Activated CD8-positive, alpha-beta T cell treated with anti-CD3 and anti-CD28 coated beads, Interleukin-2, amount 10 ng/mL, durations not matched to agents 7 days and 5 days (primary cell): ENCODE measurements at regions of chr9 and their contacts with region 1.

Region 1: DNA sequence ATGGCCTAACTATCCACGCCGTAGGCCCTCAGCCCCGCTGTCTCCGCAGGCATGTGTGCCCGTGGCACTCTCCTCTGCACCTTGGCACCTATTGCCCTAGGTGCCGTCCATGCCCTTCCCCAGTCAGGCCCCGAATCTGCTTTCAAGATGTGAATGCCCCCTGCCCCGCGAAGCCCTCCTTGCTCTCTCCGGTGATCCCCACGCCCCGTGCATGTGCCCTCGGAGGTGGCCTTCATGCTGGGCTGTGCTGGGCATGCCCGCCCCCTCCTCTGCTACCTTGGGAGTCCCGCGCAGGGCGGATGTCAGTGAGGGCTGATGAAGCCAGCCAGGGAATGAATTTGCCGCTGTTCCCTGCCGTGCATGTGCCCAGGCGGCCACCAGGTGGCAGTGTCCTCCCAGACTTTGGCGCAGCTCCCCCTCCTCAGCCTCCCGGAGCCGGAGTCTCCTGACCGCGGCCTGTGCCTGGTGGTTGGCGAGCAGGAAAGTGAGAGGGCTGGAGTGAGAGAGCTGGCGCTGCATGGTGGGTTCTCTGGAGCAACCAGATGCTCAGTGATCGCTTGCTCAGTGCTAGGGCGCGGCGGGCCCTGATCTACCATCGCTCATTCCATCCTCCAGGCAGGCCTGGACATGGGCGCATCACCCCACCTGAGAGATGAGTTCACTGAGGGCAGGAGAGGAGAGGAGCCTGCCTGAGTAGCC is 112.9 kb upstream of the LMX1B start:
- DNase-seq: peak; percentile 72
- ATAC-seq: peak; percentile 63
- H3K4me3 Mint-ChIP-seq: no peak overlapping the region
- H3K27ac Mint-ChIP-seq: no peak overlapping the region
- H3K4me1 Mint-ChIP-seq: peaks cover 16% of the 10 kb centered on the region
- H3K27me3 Mint-ChIP-seq: peaks cover 9% of the 10 kb centered on the region

Region 2: GRCh38 chr9:126471084-126471624 is 29.7 kb before region 1 on chr9:
- CTCF ChIA-PET with region 1: interaction called, 24 read pairs
- POLR2A ChIA-PET with region 1: no interaction called
- DNase-seq: peak; percentile 92
- ATAC-seq: peak; percentile 87
- H3K4me3 Mint-ChIP-seq: peak overlapping the region; percentile 55
- H3K27ac Mint-ChIP-seq: peak overlapping the region; percentile 93
- H3K4me1 Mint-ChIP-seq: peaks cover 76% of the 10 kb centered on the region
- H3K27me3 Mint-ChIP-seq: no peaks in the 10 kb centered on the region

Region 3: DNA sequence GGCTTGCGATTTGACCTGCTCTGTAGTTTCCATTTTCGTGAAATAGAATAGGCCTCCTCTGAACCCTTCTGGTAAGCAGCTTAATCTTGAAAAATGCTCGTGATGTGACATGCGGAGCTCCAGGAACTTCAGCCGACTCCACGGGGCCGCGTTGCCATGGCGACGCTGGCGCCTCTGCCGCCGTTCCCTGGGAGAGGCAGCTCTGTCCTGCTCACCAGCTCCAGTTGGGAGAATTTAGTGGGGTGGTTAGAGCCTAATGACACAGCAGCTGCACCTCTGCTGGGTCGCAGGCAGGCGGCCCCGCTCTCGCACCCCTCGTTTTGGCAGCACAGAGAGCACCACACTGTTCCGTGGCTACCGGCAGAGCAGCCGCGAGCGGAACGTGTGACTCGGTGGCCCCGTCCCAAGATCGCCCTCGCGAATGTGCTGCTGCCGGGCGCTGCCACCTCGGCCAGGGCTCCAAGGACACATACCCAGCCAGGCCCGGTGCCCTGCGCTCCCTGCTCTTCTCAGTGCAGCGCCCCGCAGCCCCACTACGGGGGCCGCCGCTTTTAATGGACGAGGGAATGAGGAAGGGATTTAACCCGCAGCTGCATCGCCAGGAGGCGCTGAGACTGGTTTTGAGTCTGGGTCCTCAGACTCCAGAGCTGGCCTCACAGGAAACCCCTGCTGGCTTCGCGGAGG is 18.3 kb before region 1 on chr9:
- CTCF ChIA-PET with region 1: interaction called, 16 read pairs
- POLR2A ChIA-PET with region 1: no interaction called
- DNase-seq: no peak
- ATAC-seq: no peak
- H3K4me3 Mint-ChIP-seq: no peak overlapping the region
- H3K27ac Mint-ChIP-seq: no peak overlapping the region
- H3K4me1 Mint-ChIP-seq: peaks cover 24% of the 10 kb centered on the region
- H3K27me3 Mint-ChIP-seq: no peaks in the 10 kb centered on the region

Region 4: GRCh38 chr9:126514047-126514821 is 13.4 kb after region 1 on chr9:
- CTCF ChIA-PET with region 1: interaction called, 97 read pairs
- POLR2A ChIA-PET with region 1: no interaction called
- DNase-seq: peak; percentile 74
- ATAC-seq: peak; percentile 85
- H3K4me3 Mint-ChIP-seq: no peak overlapping the region
- H3K27ac Mint-ChIP-seq: no peak overlapping the region
- H3K4me1 Mint-ChIP-seq: peaks cover 28% of the 10 kb centered on the region
- H3K27me3 Mint-ChIP-seq: peaks cover 54% of the 10 kb centered on the region

Region 5: GRCh38 chr9:126558051-126558665 is 57.3 kb after region 1 on chr9:
- CTCF ChIA-PET with region 1: interaction called, 144 read pairs
- POLR2A ChIA-PET with region 1: interaction called, 6 read pairs
- DNase-seq: peak; percentile 81
- ATAC-seq: peak; percentile 90
- H3K4me3 Mint-ChIP-seq: no peak overlapping the region
- H3K27ac Mint-ChIP-seq: no peak overlapping the region
- H3K4me1 Mint-ChIP-seq: no peaks in the 10 kb centered on the region
- H3K27me3 Mint-ChIP-seq: peaks cover 25% of the 10 kb centered on the region

Region 6: DNA sequence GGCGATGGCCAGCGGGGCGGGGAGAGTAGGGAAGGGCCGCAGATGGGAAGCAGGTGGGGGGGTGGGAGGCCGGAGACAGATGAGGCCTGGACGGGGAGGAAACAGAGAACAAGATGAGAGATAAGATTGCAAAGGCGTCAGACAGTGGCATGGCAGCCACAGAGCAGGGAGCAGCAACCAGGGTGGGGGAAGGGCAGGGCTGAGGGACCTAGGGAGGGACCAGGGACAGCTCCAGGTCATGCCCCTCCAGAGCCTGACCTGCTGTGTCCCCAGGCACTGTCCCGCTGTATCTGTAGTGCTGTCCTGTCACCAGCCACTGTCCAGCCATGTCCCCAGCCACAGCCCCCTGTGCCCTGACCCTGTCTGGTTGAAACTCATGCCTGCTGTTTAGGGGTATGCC is 63.3 kb after region 1 on chr9:
- CTCF ChIA-PET with region 1: interaction called, 144 read pairs
- POLR2A ChIA-PET with region 1: no interaction called
- DNase-seq: no peak
- ATAC-seq: no peak
- H3K4me3 Mint-ChIP-seq: no peak overlapping the region
- H3K27ac Mint-ChIP-seq: no peak overlapping the region
- H3K4me1 Mint-ChIP-seq: no peaks in the 10 kb centered on the region
- H3K27me3 Mint-ChIP-seq: peaks cover 31% of the 10 kb centered on the region